ENCODE measurements at regions of chr11 and their contacts with region 1.

Region 1: GRCh38 chr11:94973099-94973968 is at the starts of genes CWC15 and KDM4D:
- DNase-seq: peak; percentile 87
- ATAC-seq: peak; percentile 100
- H3K4me3 ChIP-seq: peak within 1 kb of the TSS; percentile 93 to 99 (median 97)
- H3K27ac ChIP-seq: peak within 1 kb of the TSS; percentile 81
- H3K4me1 ChIP-seq: peaks cover 25% of the 10 kb centered on the region
- H3K27me3 ChIP-seq: no peaks in the 10 kb centered on the region; a peak in 1 of 5 replicates
- CTCF ChIP-seq: no peak
- EP300 ChIP-seq: 0 out of 4 replicates have a peak, but pooled peaks of 1 of the 2 experiments have one; percentile 20
- POLR2A ChIP-seq: peak; percentile 81 to 87
- RAD21 ChIP-seq: 0 out of 2 replicates have a peak, but pooled peaks have one; percentile 14
- total RNA-seq, gene CWC15: 61.2 and 73.7 TPM in 2 replicates
- total RNA-seq, gene KDM4D: 1.3 and 2.0 TPM in 2 replicates

Region 2: DNA sequence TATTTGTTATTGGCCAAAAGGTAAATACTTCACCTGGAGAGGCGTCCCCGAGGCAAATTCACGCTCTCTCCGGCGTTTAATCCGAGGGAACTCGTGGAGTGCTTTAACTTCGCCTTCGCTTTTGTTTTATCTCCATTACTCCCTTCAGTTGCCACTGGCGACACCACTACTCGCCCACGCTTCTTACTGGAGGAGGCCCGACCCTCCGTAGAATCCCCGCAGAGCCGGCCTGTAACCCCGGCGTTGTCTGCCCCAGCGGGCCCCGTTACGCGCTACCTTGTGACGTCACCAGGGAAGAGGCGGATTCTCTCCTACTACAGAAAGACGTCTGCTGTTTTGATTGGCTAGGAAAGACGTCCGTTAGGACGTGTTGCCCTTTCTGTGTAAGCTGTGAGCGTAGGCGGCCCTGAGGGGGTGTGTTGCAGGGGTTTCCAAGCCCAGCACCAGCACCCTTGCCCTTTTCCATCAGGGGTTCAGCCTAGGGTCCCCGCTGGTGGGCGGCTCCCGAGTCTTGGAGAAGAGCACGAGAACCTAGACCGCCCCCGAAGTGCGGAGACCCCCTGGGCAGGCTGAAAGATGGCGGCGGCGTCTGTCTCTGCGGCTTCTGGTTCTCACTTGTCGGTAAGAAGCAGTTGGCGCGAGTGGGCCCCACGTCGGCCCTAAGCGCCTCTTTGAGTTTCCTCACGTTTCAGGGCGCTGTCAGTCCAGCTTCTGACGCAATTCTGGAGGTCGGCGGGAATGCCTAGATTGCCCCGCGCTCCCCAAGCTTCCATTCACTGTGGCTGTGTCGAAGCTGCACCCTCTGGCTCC is 817.0 kb after region 1 on chr11 and contains the start of gene CEP57:
- CTCF ChIA-PET with region 1: no interaction called
- POLR2A ChIA-PET with region 1: interaction called, 11 read pairs
- in situ Hi-C with region 1: no loop called
- intact Hi-C with region 1: no loop called
- DNase-seq: peak; percentile 98
- ATAC-seq: peak; percentile 84
- H3K4me3 ChIP-seq: peak within 1 kb of the TSS; percentile 87 to 98 (median 97)
- H3K27ac ChIP-seq: peak within 1 kb of the TSS; percentile 98
- H3K4me1 ChIP-seq: peaks cover 54% of the 10 kb centered on the region
- H3K27me3 ChIP-seq: no peaks in the 10 kb centered on the region; a peak in 1 of 5 replicates
- CTCF ChIP-seq: no peak
- EP300 ChIP-seq: no peak; a peak in 1 of 4 replicates
- POLR2A ChIP-seq: peak; percentile 8 to 61; a peak in 3 of 4 replicates
- RAD21 ChIP-seq: peak; percentile 5; the same call in 1 of the 2 replicates
- total RNA-seq, gene CEP57: 59.4 and 85.6 TPM in 2 replicates